ENCODE measurements at regions of chr11 and their contacts with region 1.

Region 1: DNA sequence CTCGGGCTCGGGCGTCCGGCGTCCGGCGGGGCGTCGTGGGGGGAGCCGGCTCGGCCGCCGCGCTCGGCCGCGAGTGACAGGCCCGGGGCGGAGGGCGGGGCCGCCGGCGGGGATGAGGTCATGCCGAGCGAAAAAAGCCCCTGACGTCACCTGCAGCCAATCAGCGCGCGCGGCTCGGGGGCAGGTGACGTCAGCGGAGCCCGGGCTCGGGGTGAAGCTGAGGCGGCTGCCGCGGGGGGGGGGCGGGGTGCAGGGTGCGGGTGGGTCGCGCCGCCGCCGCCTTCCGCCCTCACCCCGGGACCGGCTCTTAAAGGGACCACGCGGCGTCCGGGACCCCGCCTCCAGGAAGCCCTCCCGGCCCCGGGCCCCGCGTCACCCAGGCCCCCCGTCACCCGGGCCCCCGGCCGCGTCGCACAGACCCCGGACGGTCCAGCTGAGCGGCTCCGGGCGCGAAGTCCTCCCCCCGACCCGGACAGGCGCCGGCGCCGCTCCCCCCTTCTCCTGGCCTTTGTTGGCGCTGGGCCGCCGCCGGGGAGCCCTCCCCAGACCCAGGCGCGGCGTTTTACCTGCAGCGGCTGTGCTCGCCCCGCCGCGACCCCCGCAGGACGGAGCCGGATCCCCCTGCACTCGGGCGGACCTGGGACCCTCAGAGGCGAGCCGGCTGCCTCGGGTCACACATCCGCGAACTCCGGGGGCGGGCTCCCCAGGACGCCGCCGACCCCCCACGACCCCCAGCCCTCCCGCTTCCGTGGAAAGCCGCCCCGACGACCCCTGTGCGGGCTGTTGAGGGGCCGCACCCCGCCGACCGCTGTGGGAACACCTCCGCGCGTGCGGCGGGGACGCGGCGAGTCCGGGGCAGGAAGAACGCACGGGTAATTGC is at the start of gene DUSP8:
- DNase-seq: peak; percentile 47
- H3K4me3 Mint-ChIP-seq: peak within 1 kb of the TSS; percentile 33
- H3K27ac Mint-ChIP-seq: no peak within 1 kb of the TSS
- H3K4me1 Mint-ChIP-seq: peaks cover 13% of the 10 kb centered on the region
- H3K27me3 Mint-ChIP-seq: no peaks in the 10 kb centered on the region
- CTCF ChIP-seq: no peak
- total RNA-seq, gene DUSP8: 10.4 and 17.6 TPM in 2 replicates

Region 2: DNA sequence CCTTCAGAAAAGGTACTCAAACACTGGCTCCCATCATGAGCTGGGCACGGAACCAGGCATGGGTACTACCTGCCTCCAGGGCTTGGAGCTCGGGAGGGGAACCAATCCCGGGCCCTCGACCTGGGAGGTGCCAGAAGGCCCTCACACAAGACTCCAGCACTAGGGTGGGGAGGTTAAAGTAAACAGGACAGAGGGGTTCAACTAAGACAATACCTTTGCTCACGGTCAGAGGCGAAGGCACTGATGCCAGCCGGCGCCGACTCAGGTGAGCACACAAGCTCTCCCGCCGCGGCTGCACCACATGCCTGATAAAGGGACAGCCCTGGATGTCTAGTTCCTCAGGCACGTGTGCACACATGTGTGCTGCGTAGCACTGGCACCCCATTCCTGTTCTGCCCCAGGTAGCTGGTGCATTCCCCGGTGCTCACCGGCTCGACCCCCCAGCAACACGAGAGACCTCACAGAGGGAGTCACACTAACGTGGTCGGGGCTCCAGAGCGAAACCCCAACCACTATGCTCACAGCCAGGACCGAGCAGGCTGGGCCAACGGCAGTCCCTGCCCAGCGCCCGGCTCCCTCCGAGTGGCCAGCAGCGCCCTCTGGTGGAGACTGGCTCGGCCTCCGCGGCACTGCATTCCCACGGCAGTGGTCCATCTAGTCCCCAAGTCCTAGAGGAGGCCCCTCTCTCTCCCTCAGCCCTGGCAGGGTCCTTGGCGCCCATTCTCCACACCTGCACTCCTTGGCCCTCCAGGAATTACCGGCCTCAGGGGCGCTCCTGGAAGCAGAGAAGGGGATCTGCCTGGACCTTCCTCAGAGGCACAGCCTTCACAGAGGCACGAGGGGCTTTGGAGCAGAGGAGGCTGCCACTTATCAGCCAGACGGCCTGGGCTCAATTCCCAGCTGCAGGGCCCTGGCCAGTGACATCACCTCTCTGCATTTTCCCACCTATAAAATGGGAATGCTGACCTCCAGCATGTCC is 57.1 kb before region 1 on chr11:
- CTCF ChIA-PET with region 1: interaction called, 15 read pairs
- POLR2A ChIA-PET with region 1: interaction called, 3 read pairs
- intact Hi-C with region 1: no loop called
- DNase-seq: peak; percentile 53
- H3K4me3 Mint-ChIP-seq: no peak overlapping the region
- H3K27ac Mint-ChIP-seq: no peak overlapping the region
- H3K4me1 Mint-ChIP-seq: peaks cover 27% of the 10 kb centered on the region
- H3K27me3 Mint-ChIP-seq: no peaks in the 10 kb centered on the region
- CTCF ChIP-seq: peak; percentile 89

Region 3: GRCh38 chr11:1541474-1542204 is 30.8 kb before region 1 on chr11:
- CTCF ChIA-PET with region 1: interaction called, 94 read pairs
- POLR2A ChIA-PET with region 1: interaction called, 4 read pairs
- intact Hi-C with region 1: loop called (anchors 1 kb)
- DNase-seq: no peak
- H3K4me3 Mint-ChIP-seq: no peak overlapping the region
- H3K27ac Mint-ChIP-seq: no peak overlapping the region
- H3K4me1 Mint-ChIP-seq: no peaks in the 10 kb centered on the region
- H3K27me3 Mint-ChIP-seq: no peaks in the 10 kb centered on the region
- CTCF ChIP-seq: no peak

Region 4: GRCh38 chr11:1546536-1547400 is 25.7 kb before region 1 on chr11:
- CTCF ChIA-PET with region 1: interaction called, 94 read pairs
- POLR2A ChIA-PET with region 1: interaction called, 4 read pairs
- intact Hi-C with region 1: loop called (anchors 1 kb)
- DNase-seq: peak; percentile 42
- H3K4me3 Mint-ChIP-seq: peak overlapping the region; percentile 12
- H3K27ac Mint-ChIP-seq: no peak overlapping the region
- H3K4me1 Mint-ChIP-seq: no peaks in the 10 kb centered on the region
- H3K27me3 Mint-ChIP-seq: no peaks in the 10 kb centered on the region
- CTCF ChIP-seq: peak; percentile 98

Region 5: GRCh38 chr11:1553808-1554594 is 18.4 kb before region 1 on chr11:
- CTCF ChIA-PET with region 1: interaction called, 94 read pairs
- POLR2A ChIA-PET with region 1: interaction called, 16 read pairs
- intact Hi-C with region 1: loop called (anchors 1 kb)
- DNase-seq: peak; percentile 58
- H3K4me3 Mint-ChIP-seq: no peak overlapping the region
- H3K27ac Mint-ChIP-seq: no peak overlapping the region
- H3K4me1 Mint-ChIP-seq: peaks cover 19% of the 10 kb centered on the region
- H3K27me3 Mint-ChIP-seq: no peaks in the 10 kb centered on the region
- CTCF ChIP-seq: peak; percentile 14

Region 6: GRCh38 chr11:1559119-1559951 is 13.1 kb before region 1 on chr11:
- CTCF ChIA-PET with region 1: interaction called, 47 read pairs
- POLR2A ChIA-PET with region 1: interaction called, 16 read pairs
- intact Hi-C with region 1: loop called (anchors 1 kb)
- DNase-seq: peak; percentile 96
- H3K4me3 Mint-ChIP-seq: peak overlapping the region; percentile 52
- H3K27ac Mint-ChIP-seq: peak overlapping the region; percentile 49
- H3K4me1 Mint-ChIP-seq: peaks cover 26% of the 10 kb centered on the region
- H3K27me3 Mint-ChIP-seq: no peaks in the 10 kb centered on the region
- CTCF ChIP-seq: no peak

Region 7: DNA sequence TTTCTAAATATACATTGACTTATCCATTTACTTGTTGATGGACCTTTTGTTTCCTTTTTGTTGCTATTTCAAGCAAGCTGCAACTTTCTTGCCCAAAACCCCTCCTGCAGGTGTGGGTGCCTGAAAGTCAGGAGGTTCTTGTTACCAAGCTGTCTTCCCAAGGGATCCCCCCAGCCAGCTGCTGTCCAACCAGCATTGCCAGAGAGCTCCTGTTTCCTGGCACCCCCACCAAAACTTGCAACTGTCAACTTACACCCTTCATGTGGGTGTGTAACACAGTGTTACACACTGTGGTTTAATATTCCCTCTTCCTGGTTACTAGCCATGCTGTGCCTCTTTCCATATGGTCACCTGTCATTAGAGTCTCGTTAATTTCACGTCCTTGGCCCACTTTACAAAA is 14.3 kb after region 1 on chr11:
- CTCF ChIA-PET with region 1: interaction called, 10 read pairs
- POLR2A ChIA-PET with region 1: interaction called, 4 read pairs
- intact Hi-C with region 1: no loop called
- DNase-seq: no peak
- H3K4me3 Mint-ChIP-seq: no peak overlapping the region
- H3K27ac Mint-ChIP-seq: no peak overlapping the region
- H3K4me1 Mint-ChIP-seq: peaks cover 7% of the 10 kb centered on the region
- H3K27me3 Mint-ChIP-seq: peaks cover 12% of the 10 kb centered on the region
- CTCF ChIP-seq: no peak